ENCODE measurements at regions of chr6 and their contacts with region 1.

Region 1: GRCh38 chr6:81752138-81752920 is at the start of gene TENT5A:
- DNase-seq: peak; percentile 84
- ATAC-seq: peak; percentile 62
- H3K4me3 ChIP-seq: peak within 1 kb of the TSS; percentile 77
- H3K27ac ChIP-seq: peak within 1 kb of the TSS; percentile 75
- H3K4me1 ChIP-seq: peaks cover 16% of the 10 kb centered on the region
- H3K27me3 ChIP-seq: no peaks in the 10 kb centered on the region
- CTCF ChIP-seq: peak; percentile 21; the same call in 1 of the 2 replicates
- total RNA-seq, gene TENT5A: 5.6 and 6.4 TPM in 2 replicates

Region 2: DNA sequence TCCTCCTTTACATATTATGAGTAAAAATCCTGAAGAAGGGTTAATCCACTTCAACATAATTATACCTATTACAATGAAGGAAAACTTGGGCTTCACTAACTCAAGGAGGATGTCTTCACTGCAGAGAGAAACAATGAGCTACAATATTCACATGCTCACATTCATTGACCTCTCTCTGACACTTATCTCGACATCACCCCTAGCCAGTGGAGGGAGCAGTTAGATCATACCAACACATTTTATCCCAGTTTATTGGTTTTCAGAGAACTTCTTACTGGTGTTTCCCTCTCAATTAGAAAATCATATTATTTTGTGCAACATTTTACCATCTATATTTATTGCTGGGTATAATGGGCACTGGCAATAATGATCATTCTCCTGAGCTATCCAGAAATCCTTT is 646.3 kb before region 1 on chr6:
- CTCF ChIA-PET with region 1: no interaction called
- POLR2A ChIA-PET with region 1: no interaction called
- intact Hi-C with region 1: loop called (anchors 5 kb)
- DNase-seq: no peak
- ATAC-seq: no peak
- H3K4me3 ChIP-seq: no peak overlapping the region
- H3K27ac ChIP-seq: no peak overlapping the region
- H3K4me1 ChIP-seq: no peaks in the 10 kb centered on the region
- H3K27me3 ChIP-seq: no peaks in the 10 kb centered on the region
- CTCF ChIP-seq: no peak

Region 3: GRCh38 chr6:81401970-81402690 is 350.2 kb before region 1 on chr6:
- CTCF ChIA-PET with region 1: no interaction called
- POLR2A ChIA-PET with region 1: no interaction called
- intact Hi-C with region 1: no loop called
- DNase-seq: peak; percentile 17
- ATAC-seq: peak; percentile 60
- H3K4me3 ChIP-seq: no peak overlapping the region
- H3K27ac ChIP-seq: no peak overlapping the region
- H3K4me1 ChIP-seq: 0 out of 2 replicates have a peak, but pooled peaks cover 3% of the 10 kb centered on the region
- H3K27me3 ChIP-seq: no peaks in the 10 kb centered on the region
- CTCF ChIP-seq: no peak

Region 4: GRCh38 chr6:81465859-81466258 is 286.5 kb before region 1 on chr6:
- CTCF ChIA-PET with region 1: no interaction called
- POLR2A ChIA-PET with region 1: no interaction called
- intact Hi-C with region 1: loop called (anchors 5 kb)
- DNase-seq: peak; percentile 49
- ATAC-seq: no peak
- H3K4me3 ChIP-seq: no peak overlapping the region
- H3K27ac ChIP-seq: no peak overlapping the region
- H3K4me1 ChIP-seq: no peaks in the 10 kb centered on the region
- H3K27me3 ChIP-seq: no peaks in the 10 kb centered on the region
- CTCF ChIP-seq: peak; percentile 66

Region 5: GRCh38 chr6:81859884-81860283 is 107.6 kb after region 1 on chr6:
- CTCF ChIA-PET with region 1: no interaction called
- POLR2A ChIA-PET with region 1: no interaction called
- intact Hi-C with region 1: no loop called
- DNase-seq: no peak
- ATAC-seq: no peak
- H3K4me3 ChIP-seq: no peak overlapping the region
- H3K27ac ChIP-seq: no peak overlapping the region
- H3K4me1 ChIP-seq: peaks cover 9% of the 10 kb centered on the region
- H3K27me3 ChIP-seq: no peaks in the 10 kb centered on the region
- CTCF ChIP-seq: no peak

Region 6: DNA sequence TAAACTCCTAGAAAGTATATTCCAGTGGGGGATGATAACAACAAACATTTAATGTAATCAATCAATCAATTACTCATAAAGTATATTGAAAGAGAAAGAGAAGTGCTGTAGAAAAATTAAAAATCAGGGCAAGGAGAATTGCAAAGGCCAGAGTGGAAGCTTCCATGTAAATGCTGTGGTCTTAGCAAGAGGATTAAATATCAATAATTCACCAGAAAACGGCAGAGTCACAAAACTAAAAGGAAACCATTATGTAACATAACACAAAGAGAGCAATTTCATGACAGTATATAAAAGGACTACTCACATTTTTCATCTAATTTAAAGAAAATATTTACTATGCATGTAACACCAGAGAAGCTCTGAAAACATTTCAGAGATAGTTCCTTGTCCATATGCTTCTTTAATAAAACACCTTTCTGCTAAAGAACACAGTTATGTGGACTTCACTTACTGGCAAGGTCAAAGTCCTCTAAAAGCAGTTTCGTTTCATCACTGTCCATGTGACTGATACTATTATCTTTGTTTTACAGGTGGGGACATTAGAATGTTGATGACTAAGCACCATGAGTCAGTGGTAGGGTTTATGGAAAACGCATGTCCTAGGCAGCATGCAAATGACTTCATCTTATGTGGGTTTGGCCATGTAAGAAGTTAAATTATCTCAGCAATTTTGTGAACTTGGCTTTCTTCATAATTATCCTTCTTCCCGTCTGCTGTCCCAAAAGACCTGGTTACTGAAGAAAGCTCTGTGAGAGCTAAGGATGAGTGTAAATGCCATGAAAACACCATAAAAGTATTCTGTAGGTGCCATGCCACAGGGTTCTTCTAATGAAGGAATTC is 185.9 kb after region 1 on chr6:
- CTCF ChIA-PET with region 1: interaction called, 4 read pairs
- POLR2A ChIA-PET with region 1: no interaction called
- intact Hi-C with region 1: loop called (anchors 5 kb)
- DNase-seq: peak; percentile 94
- ATAC-seq: peak; percentile 73
- H3K4me3 ChIP-seq: peak overlapping the region; percentile 51
- H3K27ac ChIP-seq: peak overlapping the region; percentile 99
- H3K4me1 ChIP-seq: peaks cover 62% of the 10 kb centered on the region
- H3K27me3 ChIP-seq: no peaks in the 10 kb centered on the region
- CTCF ChIP-seq: no peak

Region 7: GRCh38 chr6:81997091-81997926 is 245.0 kb after region 1 on chr6:
- CTCF ChIA-PET with region 1: no interaction called
- POLR2A ChIA-PET with region 1: no interaction called
- intact Hi-C with region 1: loop called (anchors 5 kb)
- DNase-seq: peak; percentile 86
- ATAC-seq: peak; percentile 62
- H3K4me3 ChIP-seq: peak overlapping the region; percentile 49
- H3K27ac ChIP-seq: peak overlapping the region; percentile 99
- H3K4me1 ChIP-seq: peaks cover 41% of the 10 kb centered on the region
- H3K27me3 ChIP-seq: no peaks in the 10 kb centered on the region
- CTCF ChIP-seq: no peak

Measured in PC-3 (cell line).